CD4-positive, alpha-beta memory T cell (primary cell): ENCODE measurements at regions of chr5 and their contacts with region 1.

Region 1: GRCh38 chr5:174431504-174431903 is 292.9 kb upstream of the MSX2 start:
- DNase-seq: no peak
- H3K4me3 ChIP-seq: no peak overlapping the region
- H3K4me3 Mint-ChIP-seq: peak overlapping the region in 1 of 8 donors; percentile 41
- H3K27ac ChIP-seq: no peak overlapping the region
- H3K27ac Mint-ChIP-seq: no peak overlapping the region
- H3K4me1 ChIP-seq: peaks cover 15% of the 10 kb centered on the region
- H3K4me1 Mint-ChIP-seq: peaks cover 0 to 20% (median 3%) of the 10 kb centered on the region in 4 donors
- H3K27me3 ChIP-seq: no peaks in the 10 kb centered on the region
- H3K27me3 Mint-ChIP-seq: peaks cover 4 to 5% of the 10 kb centered on the region in 2 donors

Region 2: GRCh38 chr5:173498286-173498685 is 933.2 kb before region 1 on chr5:
- CTCF ChIA-PET with region 1: no interaction called
- POLR2A ChIA-PET with region 1: no interaction called
- intact Hi-C with region 1: no loop called
- DNase-seq: no peak
- H3K4me3 ChIP-seq: no peak overlapping the region
- H3K4me3 Mint-ChIP-seq: no peak overlapping the region
- H3K27ac ChIP-seq: no peak overlapping the region
- H3K27ac Mint-ChIP-seq: no peak overlapping the region
- H3K4me1 ChIP-seq: no peaks in the 10 kb centered on the region
- H3K4me1 Mint-ChIP-seq: no peaks in the 10 kb centered on the region
- H3K27me3 ChIP-seq: no peaks in the 10 kb centered on the region
- H3K27me3 Mint-ChIP-seq: peaks cover 7 to 9% of the 10 kb centered on the region in 2 donors

Region 3: GRCh38 chr5:174397206-174397605 is 34.3 kb before region 1 on chr5:
- CTCF ChIA-PET with region 1: no interaction called
- POLR2A ChIA-PET with region 1: no interaction called
- intact Hi-C with region 1: no loop called
- DNase-seq: no peak
- H3K4me3 ChIP-seq: no peak overlapping the region
- H3K4me3 Mint-ChIP-seq: no peak overlapping the region
- H3K27ac ChIP-seq: no peak overlapping the region
- H3K27ac Mint-ChIP-seq: no peak overlapping the region
- H3K4me1 ChIP-seq: no peaks in the 10 kb centered on the region
- H3K4me1 Mint-ChIP-seq: no peaks in the 10 kb centered on the region
- H3K27me3 ChIP-seq: no peaks in the 10 kb centered on the region
- H3K27me3 Mint-ChIP-seq: peaks cover 9 to 10% of the 10 kb centered on the region in 2 donors

Region 4: GRCh38 chr5:174453696-174454095 is 22.2 kb after region 1 on chr5:
- CTCF ChIA-PET with region 1: interaction called, 3 read pairs
- POLR2A ChIA-PET with region 1: interaction called, 10 read pairs
- intact Hi-C with region 1: no loop called
- DNase-seq: peak in 3 of 5 donors; percentile 17 to 37 (median 25)
- H3K4me3 ChIP-seq: peak overlapping the region in 1 of 2 donors; percentile 0
- H3K4me3 Mint-ChIP-seq: peak overlapping the region; percentile 64 to 94 (median 82)
- H3K27ac ChIP-seq: peak overlapping the region; percentile 38
- H3K27ac Mint-ChIP-seq: peak overlapping the region; percentile 43 to 91 (median 82)
- H3K4me1 ChIP-seq: peaks cover 22% of the 10 kb centered on the region
- H3K4me1 Mint-ChIP-seq: peaks cover 18 to 58% (median 33%) of the 10 kb centered on the region in 4 donors
- H3K27me3 ChIP-seq: no peaks in the 10 kb centered on the region
- H3K27me3 Mint-ChIP-seq: no peaks in the 10 kb centered on the region